Astrocyte of the cerebellum (primary cell): ENCODE measurements at regions of chr22 and their contacts with region 1.

Region 1: GRCh38 chr22:32932176-32932575 is 126.0 kb downstream of the SYN3 start:
- DNase-seq: no peak
- H3K4me3 ChIP-seq: no peak overlapping the region
- CTCF ChIP-seq: no peak

Region 2: DNA sequence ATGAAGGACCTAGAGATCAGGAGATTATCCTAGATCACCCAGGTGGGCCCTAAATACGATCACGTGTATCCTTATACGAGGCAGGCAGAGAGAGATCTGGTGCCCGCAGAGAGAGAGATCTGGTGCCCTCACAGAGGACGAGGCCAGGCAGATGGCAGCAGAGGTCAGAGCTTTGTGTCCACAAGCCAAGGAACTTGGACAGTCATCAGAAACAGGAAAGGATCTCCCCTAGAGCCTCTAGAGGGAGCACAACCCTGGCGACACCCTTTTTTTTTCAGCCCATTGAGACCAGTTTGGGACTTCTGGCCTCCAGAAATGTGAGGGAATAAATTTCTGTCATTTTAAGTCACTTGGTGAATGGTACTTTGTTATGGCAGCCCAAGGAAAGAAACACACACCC is 156.2 kb before region 1 on chr22:
- in situ Hi-C with region 1: no loop called
- DNase-seq: no peak
- H3K4me3 ChIP-seq: no peak overlapping the region
- CTCF ChIP-seq: peak; percentile 22

Region 3: DNA sequence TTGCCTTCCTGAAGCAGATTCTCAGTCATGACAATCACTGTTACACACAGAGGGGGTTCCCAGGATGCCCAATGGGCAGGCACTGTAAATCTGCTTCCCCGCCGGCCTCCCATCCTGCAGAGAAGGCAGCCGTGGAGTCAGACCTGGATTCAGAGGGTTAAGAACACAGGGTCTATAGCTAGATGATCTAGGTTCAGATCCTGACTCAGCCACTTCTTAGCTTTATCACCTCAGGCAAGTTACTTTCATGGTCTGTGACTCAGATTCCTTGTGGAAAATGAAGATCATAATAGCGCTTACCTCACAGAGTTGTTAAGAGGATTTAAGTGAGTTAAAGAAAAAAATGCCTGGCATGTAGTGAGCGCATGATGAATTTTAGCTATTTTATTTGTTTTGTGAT is 34.8 kb before region 1 on chr22:
- in situ Hi-C with region 1: loop called (anchors 5 kb)
- DNase-seq: no peak
- H3K4me3 ChIP-seq: no peak overlapping the region
- CTCF ChIP-seq: no peak